K562 (cell line): ENCODE measurements at regions of chr18 and their contacts with region 1.

Region 1: GRCh38 chr18:31741097-31741735 is 19.5 kb downstream of the SLC25A52 start:
- DNase-seq: peak; percentile 31 to 66 (median 33)
- ATAC-seq: peak; percentile 70
- H3K4me3 ChIP-seq: no peak overlapping the region
- H3K27ac ChIP-seq: no peak overlapping the region
- H3K4me1 ChIP-seq: peaks cover 0 to 7% of the 10 kb centered on the region in 2 experiments; a peak in 2 of 5 replicates
- H3K27me3 ChIP-seq: peaks cover under 1 to 8% of the 10 kb centered on the region in 2 experiments; a peak in 3 of 5 replicates
- CTCF ChIP-seq: peak; percentile 46 to 85 (median 82)
- EP300 ChIP-seq: no peak
- POLR2A ChIP-seq: no peak
- RAD21 ChIP-seq: peak; percentile 62 to 82

Region 2: DNA sequence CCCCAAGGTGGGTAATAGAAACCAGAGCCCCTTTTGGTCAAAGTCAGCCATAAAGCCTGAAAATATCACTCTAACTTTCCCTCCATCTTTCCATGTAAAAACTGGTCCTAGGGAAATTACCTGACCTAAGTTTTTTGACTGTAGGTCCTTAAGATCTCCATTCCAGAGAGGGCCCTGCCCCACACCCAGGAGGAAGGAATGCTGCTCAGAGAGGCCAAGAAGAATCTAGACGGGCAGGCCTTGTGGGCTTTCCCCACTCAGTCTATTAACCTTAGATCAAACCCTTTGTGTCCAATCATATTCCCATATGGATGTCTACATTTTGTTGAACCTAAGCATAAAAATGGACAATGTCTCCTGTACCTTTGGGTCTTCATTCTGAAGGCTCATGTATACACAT is 26.4 kb after region 1 on chr18:
- CTCF ChIA-PET with region 1: no interaction called
- POLR2A ChIA-PET with region 1: no interaction called
- in situ Hi-C with region 1: no loop called
- intact Hi-C with region 1: no loop called
- DNase-seq: no peak
- ATAC-seq: no peak
- H3K4me3 ChIP-seq: no peak overlapping the region
- H3K27ac ChIP-seq: no peak overlapping the region
- H3K4me1 ChIP-seq: no peaks in the 10 kb centered on the region
- H3K27me3 ChIP-seq: peaks cover 13% of the 10 kb centered on the region in 2 experiments; a peak in 4 of 5 replicates
- CTCF ChIP-seq: no peak
- EP300 ChIP-seq: no peak
- POLR2A ChIP-seq: no peak
- RAD21 ChIP-seq: no peak

Region 3: DNA sequence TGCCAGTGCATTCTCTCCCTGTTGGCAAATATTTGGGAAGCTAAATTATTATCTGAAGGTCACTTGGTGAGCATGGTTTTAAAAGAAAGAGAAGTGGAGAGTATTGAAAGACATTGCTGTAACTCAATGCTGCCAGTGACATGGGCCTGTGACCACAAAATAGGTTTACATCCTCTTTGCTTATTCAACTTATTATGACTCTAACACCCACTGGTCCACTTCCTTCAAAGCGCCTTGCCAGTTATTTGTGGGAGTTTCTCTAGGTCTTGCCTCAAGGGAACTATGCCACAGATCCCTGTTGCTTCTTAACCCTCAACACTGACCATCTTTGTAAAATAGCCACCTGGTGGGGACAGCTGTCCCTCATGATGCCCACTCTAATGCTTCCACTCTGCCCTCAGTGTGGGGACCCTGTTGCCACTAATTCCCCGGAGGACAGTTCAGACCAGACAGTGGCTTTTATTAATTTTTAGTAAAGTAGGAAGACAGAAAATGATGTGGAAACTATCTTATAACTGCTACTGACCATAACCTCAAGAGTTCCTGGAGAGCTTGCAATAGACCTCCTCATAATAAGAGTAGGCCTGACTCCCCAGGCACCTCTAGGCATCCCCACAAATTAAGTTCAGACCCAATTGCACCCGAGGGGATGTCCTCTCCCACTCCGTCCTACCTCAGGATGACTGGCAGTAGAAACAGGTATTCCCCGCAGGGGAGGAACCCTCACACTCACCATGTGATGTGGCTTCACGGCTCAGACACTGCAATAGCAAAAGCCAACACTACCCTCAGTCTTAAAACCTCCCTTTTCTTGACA is 50.8 kb after region 1 on chr18:
- CTCF ChIA-PET with region 1: no interaction called
- POLR2A ChIA-PET with region 1: no interaction called
- in situ Hi-C with region 1: no loop called
- intact Hi-C with region 1: no loop called
- DNase-seq: no peak
- ATAC-seq: no peak
- H3K4me3 ChIP-seq: no peak overlapping the region
- H3K27ac ChIP-seq: no peak overlapping the region
- H3K4me1 ChIP-seq: no peaks in the 10 kb centered on the region
- H3K27me3 ChIP-seq: peaks cover 0 to 3% of the 10 kb centered on the region in 2 experiments; a peak in 1 of 5 replicates
- CTCF ChIP-seq: no peak
- EP300 ChIP-seq: no peak
- POLR2A ChIP-seq: no peak
- RAD21 ChIP-seq: no peak

Region 4: DNA sequence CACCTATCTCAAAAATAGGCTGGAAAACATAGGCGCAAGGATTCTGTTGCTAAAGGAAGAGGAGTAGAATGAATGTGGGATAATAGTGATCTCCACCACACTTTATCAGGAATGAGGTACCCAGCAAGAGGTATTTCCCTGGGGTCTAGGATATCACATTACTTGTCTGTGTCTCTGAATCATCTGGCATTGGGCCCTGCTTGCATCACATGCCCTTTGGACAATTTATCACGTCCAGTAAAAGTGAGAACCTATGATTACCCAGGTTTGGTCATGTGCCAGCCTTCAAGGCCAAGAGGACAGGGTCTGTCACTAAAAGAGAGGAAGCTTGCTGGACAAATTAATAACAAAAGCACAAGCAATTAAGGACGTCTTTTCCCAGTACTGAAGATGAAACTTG is 213.1 kb after region 1 on chr18:
- CTCF ChIA-PET with region 1: interaction called, 4 read pairs
- POLR2A ChIA-PET with region 1: no interaction called
- in situ Hi-C with region 1: loop called (anchors 10 kb)
- intact Hi-C with region 1: loop called (anchors 1 kb)
- DNase-seq: no peak
- ATAC-seq: no peak
- H3K4me3 ChIP-seq: no peak overlapping the region
- H3K27ac ChIP-seq: no peak overlapping the region
- H3K4me1 ChIP-seq: 0 out of 5 replicates have a peak, but pooled peaks cover 0 to 4% of the 10 kb centered on the region in 2 experiments
- H3K27me3 ChIP-seq: no peaks in the 10 kb centered on the region
- CTCF ChIP-seq: no peak
- EP300 ChIP-seq: no peak
- POLR2A ChIP-seq: no peak
- RAD21 ChIP-seq: no peak

Region 5: DNA sequence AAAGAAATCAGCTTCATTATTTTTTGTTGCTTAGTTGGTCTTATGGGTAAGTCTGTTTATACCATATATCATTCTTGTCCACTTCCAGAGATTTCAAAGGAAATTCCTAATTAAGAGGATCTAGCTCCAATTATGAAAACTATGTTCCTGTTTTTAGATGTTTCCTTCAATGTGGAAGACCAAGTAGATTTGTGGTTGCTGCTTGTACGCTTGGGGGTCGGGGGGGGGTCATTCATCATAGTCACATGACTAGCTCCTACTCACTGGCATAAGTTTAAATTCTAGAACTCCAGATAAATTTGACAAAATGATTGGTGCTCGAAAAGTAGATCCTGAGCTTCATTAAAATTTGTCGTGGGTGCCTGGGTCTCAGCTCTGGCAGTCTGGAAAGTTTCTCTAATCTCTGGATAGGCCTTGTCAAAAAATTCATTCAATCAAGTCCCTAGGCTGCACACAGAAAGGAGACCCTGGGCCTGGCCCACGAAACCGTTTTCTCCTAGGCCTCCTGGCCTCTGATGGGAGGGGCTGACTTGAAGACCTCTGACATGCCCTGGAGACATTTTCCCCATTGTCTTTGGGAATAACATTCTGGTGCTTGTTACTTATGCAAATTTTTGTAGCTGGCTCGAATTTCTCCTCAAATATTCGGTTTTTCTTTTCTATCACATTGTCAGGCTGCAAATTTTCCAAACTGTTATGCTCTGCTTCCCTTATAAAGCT is 511.1 kb after region 1 on chr18:
- CTCF ChIA-PET with region 1: no interaction called
- POLR2A ChIA-PET with region 1: no interaction called
- in situ Hi-C with region 1: no loop called
- intact Hi-C with region 1: no loop called
- DNase-seq: no peak
- ATAC-seq: no peak
- H3K4me3 ChIP-seq: no peak overlapping the region
- H3K27ac ChIP-seq: no peak overlapping the region
- H3K4me1 ChIP-seq: no peaks in the 10 kb centered on the region
- H3K27me3 ChIP-seq: no peaks in the 10 kb centered on the region
- CTCF ChIP-seq: no peak
- EP300 ChIP-seq: no peak
- POLR2A ChIP-seq: no peak
- RAD21 ChIP-seq: no peak